Mucosa of descending colon (tissue), 3 donors: ENCODE measurements at regions of chr5 and their contacts with region 1.

Region 1: GRCh38 chr5:103232393-103232999 is 26.1 kb upstream of the MACIR start:
- DNase-seq: peak in 1 of 3 donors; percentile 59
- ATAC-seq: peak; percentile 86
- H3K4me3 ChIP-seq: no peak overlapping the region
- H3K4me1 ChIP-seq: no peaks in the 10 kb centered on the region
- CTCF ChIP-seq: peak; percentile 75

Region 2: DNA sequence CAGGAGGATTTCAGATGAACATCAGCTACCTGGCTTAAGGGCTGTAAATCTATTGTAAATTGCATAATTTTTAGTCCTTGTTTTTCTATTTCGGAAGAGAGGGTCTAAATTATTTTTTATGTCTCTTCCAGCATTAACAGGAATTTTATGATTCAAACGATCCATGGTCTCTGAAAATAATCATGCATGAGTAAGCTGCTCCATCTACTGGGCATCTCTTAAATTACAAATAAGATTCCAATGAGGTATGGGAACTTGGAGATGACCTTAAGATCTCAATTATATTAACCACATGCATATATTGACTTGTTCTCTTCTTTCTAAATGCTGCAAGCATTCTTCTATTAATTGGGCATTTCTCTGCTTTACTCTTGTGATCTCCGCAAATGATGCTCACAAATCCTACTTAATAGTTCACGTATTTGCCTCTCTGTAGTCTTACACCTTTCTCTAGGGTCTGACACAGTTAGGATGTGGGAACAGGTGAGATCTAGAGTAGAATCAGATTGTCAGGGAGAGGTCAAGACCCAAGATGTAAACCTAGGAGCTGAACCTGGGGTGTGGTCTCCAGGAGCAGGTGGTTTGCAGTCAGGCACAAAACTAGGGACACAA is 243.2 kb after region 1 on chr5:
- intact Hi-C with region 1: loop called (anchors 2 to 5 kb)
- DNase-seq: no peak
- ATAC-seq: peak; percentile 49
- H3K4me3 ChIP-seq: no peak overlapping the region
- H3K4me1 ChIP-seq: peaks cover 4% of the 10 kb centered on the region
- CTCF ChIP-seq: no peak

Region 3: DNA sequence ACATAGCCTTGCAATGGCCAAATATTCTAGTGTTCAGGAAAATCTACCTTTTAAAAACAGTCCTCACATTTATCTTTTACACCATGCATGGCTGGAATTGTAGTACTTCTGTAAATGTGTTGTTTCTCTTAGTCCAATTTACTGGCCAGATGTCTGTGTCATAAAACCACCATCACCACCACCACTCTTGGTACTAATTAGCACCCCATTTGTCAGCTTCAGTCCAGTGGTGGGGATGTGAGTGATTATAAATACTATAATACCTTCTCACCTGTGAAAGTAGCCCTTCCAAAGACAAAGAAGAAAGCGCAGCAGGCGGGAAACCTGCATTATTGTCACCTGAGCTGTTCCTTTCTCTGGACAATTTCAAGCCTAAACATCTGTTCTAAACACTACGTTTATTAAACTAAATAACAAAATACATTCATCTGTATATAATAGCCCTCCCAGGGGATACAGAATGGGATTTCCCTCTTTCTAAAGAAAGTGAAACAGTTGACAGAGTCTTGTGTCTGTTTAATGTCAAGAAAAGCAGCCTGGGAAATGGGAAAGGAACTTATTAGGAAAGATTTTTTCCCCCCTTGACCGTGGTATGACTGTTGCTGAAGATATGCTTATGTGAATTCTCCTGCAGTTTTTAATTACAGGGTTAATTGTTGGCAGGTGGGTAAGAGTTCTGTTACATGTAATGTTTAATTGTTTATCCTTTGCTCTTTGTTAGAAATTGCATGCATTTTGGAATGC is 474.6 kb after region 1 on chr5:
- intact Hi-C with region 1: no loop called
- DNase-seq: no peak
- ATAC-seq: no peak
- H3K4me3 ChIP-seq: no peak overlapping the region
- H3K4me1 ChIP-seq: no peaks in the 10 kb centered on the region
- CTCF ChIP-seq: no peak